ENCODE measurements at regions of chr15 and their contacts with region 1.

Region 1: GRCh38 chr15:38647683-38648082 is 83.1 kb upstream of the RASGRP1 start:
- DNase-seq: no peak
- ATAC-seq: no peak
- H3K4me3 Mint-ChIP-seq: no peak overlapping the region
- H3K27ac Mint-ChIP-seq: peak overlapping the region; percentile 34
- H3K4me1 Mint-ChIP-seq: peaks cover 75% of the 10 kb centered on the region
- H3K27me3 Mint-ChIP-seq: no peaks in the 10 kb centered on the region

Region 2: DNA sequence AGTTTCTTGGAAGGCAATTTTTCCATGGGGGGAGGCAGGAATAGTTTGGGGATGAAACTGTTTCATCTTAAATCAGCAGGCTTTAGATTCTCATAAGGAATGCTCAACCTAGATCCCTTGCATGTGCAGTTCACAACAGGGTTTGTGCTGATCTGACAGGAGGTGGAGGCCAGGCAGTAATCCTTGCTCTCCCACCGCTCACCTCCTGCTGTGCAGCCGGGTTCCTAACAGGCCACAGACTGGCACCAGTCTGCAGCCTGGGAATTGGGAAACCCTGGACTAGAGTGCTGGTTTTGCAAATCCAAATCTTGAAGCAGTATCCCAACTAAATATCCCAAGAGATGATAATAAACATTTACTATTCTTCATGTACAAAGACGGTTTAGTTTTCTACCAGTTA is 969.6 kb before region 1 on chr15:
- CTCF ChIA-PET with region 1: no interaction called
- POLR2A ChIA-PET with region 1: no interaction called
- intact Hi-C with region 1: no loop called
- DNase-seq: no peak
- ATAC-seq: no peak
- H3K4me3 Mint-ChIP-seq: no peak overlapping the region
- H3K27ac Mint-ChIP-seq: no peak overlapping the region
- H3K4me1 Mint-ChIP-seq: no peaks in the 10 kb centered on the region
- H3K27me3 Mint-ChIP-seq: no peaks in the 10 kb centered on the region

Region 3: DNA sequence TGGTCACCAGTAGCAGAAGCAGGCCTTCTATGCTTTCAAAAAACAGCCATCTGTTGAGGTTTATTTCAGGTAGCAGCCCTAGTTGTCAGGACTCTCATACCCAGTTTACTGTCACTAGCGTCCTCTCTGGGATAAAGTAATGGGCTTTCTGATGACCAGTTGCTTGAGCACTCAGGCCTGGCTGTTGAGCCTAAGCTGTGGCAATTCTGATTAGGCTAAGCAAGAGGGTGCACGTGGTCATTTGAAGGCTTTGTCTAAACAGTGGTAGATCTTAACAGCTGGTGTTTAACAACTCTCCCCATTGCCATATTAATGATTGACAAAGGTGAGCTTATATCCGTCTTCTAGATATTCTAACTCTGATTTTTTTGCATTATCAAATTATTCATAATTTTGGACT is 846.2 kb before region 1 on chr15:
- CTCF ChIA-PET with region 1: no interaction called
- POLR2A ChIA-PET with region 1: no interaction called
- intact Hi-C with region 1: no loop called
- DNase-seq: no peak
- ATAC-seq: no peak
- H3K4me3 Mint-ChIP-seq: no peak overlapping the region
- H3K27ac Mint-ChIP-seq: no peak overlapping the region
- H3K4me1 Mint-ChIP-seq: no peaks in the 10 kb centered on the region
- H3K27me3 Mint-ChIP-seq: peaks cover 2% of the 10 kb centered on the region

Region 4: DNA sequence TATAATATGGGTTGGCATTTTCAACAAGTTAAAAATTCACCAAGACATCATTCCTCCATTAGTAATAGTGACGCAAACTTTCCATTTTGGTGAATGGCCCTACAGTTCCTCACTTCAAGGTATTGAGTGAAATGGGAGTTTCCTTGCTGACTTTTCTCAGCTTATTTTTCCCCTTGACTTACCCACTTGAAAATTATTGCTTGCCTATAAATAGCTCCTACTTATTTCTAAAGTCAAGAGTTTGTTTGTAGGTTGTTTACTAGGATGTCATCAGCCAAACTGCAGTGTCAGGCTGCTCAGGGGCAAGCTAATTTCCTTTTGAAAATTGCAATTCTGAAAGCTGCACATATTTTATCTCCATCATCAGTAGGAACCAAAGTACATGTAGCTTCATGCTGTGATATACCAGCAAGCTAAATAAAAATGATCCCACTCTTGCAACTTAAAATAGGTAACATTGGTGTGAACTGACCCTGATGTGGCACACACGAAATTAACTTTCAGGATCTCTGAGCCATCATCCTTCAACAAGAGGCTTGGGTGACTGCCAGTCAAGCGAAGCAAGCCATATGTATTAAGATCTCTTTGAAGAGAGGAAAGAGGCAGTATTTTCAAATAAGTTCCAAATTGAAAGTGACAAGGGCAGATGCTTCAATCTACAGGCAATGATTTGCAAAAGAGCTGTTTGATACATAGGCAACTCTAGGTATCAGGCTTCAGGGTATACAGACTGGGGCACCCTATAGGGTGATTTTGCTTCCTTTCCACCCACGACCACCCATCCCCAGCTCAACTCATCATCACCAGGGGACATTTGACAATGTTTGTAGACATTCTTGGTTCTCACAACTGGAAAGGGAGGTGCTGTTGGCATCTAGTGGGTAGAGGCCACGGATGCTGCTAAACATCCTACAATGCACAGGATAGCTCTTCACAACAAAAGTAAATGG is 16.3 kb before region 1 on chr15:
- CTCF ChIA-PET with region 1: interaction called, 15 read pairs
- POLR2A ChIA-PET with region 1: interaction called, 4 read pairs
- intact Hi-C with region 1: no loop called
- DNase-seq: no peak
- ATAC-seq: peak; percentile 69
- H3K4me3 Mint-ChIP-seq: no peak overlapping the region
- H3K27ac Mint-ChIP-seq: peak overlapping the region; percentile 88
- H3K4me1 Mint-ChIP-seq: peaks cover 54% of the 10 kb centered on the region
- H3K27me3 Mint-ChIP-seq: no peaks in the 10 kb centered on the region

Region 5: DNA sequence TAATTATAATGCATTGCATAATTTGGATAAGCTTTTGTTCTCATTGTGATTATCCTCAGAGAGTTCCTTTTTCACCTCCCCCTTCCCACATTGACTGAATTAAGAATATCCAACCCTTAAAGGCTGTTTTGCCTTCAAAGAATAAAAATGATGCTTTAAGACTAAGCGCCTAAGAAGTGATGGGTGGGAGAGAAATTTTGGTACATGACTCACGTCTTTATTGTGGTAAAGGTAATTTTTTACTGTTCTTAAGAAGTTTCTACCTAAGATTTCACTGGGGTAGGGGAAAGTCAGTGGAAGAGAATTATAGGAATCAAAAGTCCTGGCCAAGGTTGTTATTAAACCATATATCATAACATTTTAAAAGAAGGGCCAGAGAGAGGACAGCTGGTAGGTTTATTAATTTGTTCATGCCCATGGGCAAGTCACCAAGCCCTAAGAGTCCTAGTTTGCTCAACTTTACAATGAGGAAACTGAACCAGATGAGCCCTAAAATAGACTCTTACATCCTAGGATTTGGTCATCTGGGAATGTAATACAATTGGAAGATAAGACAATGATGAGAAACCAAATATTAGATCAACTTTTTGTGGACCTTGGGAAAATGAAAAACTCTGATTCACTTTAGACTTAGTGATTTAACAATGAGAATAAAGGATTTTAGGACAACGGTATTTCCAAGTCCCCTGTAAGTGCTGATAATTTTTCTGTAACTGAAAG is 18.1 kb after region 1 on chr15:
- CTCF ChIA-PET with region 1: interaction called, 32 read pairs
- POLR2A ChIA-PET with region 1: no interaction called
- intact Hi-C with region 1: loop called in 1 of 2 experiments (anchors 1 kb)
- DNase-seq: no peak
- ATAC-seq: peak; percentile 37
- H3K4me3 Mint-ChIP-seq: no peak overlapping the region
- H3K27ac Mint-ChIP-seq: peak overlapping the region; percentile 83
- H3K4me1 Mint-ChIP-seq: peaks cover 89% of the 10 kb centered on the region
- H3K27me3 Mint-ChIP-seq: no peaks in the 10 kb centered on the region

Region 6: GRCh38 chr15:38671675-38672254 is 24.1 kb after region 1 on chr15:
- CTCF ChIA-PET with region 1: interaction called, 32 read pairs
- POLR2A ChIA-PET with region 1: interaction called, 5 read pairs
- intact Hi-C with region 1: loop called in 1 of 2 experiments (anchors 1 kb)
- DNase-seq: peak; percentile 65
- ATAC-seq: peak; percentile 55
- H3K4me3 Mint-ChIP-seq: peak overlapping the region; percentile 60
- H3K27ac Mint-ChIP-seq: peak overlapping the region; percentile 98
- H3K4me1 Mint-ChIP-seq: peaks cover 75% of the 10 kb centered on the region
- H3K27me3 Mint-ChIP-seq: no peaks in the 10 kb centered on the region

Region 7: GRCh38 chr15:39140060-39140604 is 492.4 kb after region 1 on chr15:
- CTCF ChIA-PET with region 1: no interaction called
- POLR2A ChIA-PET with region 1: no interaction called
- intact Hi-C with region 1: no loop called
- DNase-seq: peak; percentile 9
- ATAC-seq: peak; percentile 60
- H3K4me3 Mint-ChIP-seq: no peak overlapping the region
- H3K27ac Mint-ChIP-seq: no peak overlapping the region
- H3K4me1 Mint-ChIP-seq: peaks cover 15% of the 10 kb centered on the region
- H3K27me3 Mint-ChIP-seq: peaks cover 10% of the 10 kb centered on the region

Measured in activated CD4-positive, alpha-beta T cell treated with anti-CD3 and anti-CD28 coated beads for 36 hours (primary cell).